MCF 10A (cell line): ENCODE measurements at regions of chr4 and their contacts with region 1.

Region 1: GRCh38 chr4:110005461-110006056 is 92.9 kb downstream of the EGF start:
- DNase-seq: peak; percentile 77
- H3K4me3 Mint-ChIP-seq: no peak overlapping the region
- H3K27ac Mint-ChIP-seq: no peak overlapping the region
- H3K4me1 Mint-ChIP-seq: peaks cover 6% of the 10 kb centered on the region
- H3K27me3 Mint-ChIP-seq: no peaks in the 10 kb centered on the region
- CTCF ChIP-seq: peak; percentile 64

Region 2: GRCh38 chr4:109702950-109703663 is 302.5 kb before region 1 on chr4 and contains the start of gene CASP6:
- CTCF ChIA-PET with region 1: no interaction called
- POLR2A ChIA-PET with region 1: no interaction called
- intact Hi-C with region 1: no loop called
- DNase-seq: peak; percentile 79
- H3K4me3 Mint-ChIP-seq: peak within 1 kb of the TSS; percentile 94
- H3K27ac Mint-ChIP-seq: peak within 1 kb of the TSS; percentile 95
- H3K4me1 Mint-ChIP-seq: peaks cover 28% of the 10 kb centered on the region
- H3K27me3 Mint-ChIP-seq: no peaks in the 10 kb centered on the region
- CTCF ChIP-seq: peak; percentile 60
- total RNA-seq, gene CASP6: 7.9 and 8.1 TPM in 2 replicates

Region 3: DNA sequence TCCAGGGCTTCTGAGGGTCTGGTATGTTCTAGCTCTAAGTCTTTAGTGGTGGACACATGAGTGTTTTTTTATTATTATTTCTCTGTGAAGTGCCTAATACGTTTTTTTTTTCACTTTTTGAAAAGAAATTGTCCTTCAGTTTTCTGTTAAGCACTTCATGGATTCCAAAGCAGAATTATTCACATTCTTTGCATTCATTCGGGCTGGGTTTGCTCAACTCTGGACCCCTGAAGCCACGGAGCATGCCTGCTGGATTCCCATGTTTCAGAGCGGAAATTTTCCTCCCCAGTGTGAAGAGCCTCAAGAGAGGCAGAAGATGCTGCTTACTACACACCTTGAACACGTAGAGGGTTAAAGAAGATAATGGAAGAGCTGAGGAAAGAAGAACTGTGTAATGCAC is 14.6 kb after region 1 on chr4:
- CTCF ChIA-PET with region 1: interaction called, 37 read pairs
- POLR2A ChIA-PET with region 1: interaction called, 3 read pairs
- intact Hi-C with region 1: no loop called
- DNase-seq: no peak
- H3K4me3 Mint-ChIP-seq: no peak overlapping the region
- H3K27ac Mint-ChIP-seq: no peak overlapping the region
- H3K4me1 Mint-ChIP-seq: peaks cover 7% of the 10 kb centered on the region
- H3K27me3 Mint-ChIP-seq: no peaks in the 10 kb centered on the region
- CTCF ChIP-seq: no peak

Region 4: GRCh38 chr4:110310795-110311194 is 305.2 kb after region 1 on chr4:
- CTCF ChIA-PET with region 1: interaction called, 7 read pairs
- POLR2A ChIA-PET with region 1: no interaction called
- intact Hi-C with region 1: loop called (anchors 2 kb)
- DNase-seq: no peak
- H3K4me3 Mint-ChIP-seq: no peak overlapping the region
- H3K27ac Mint-ChIP-seq: no peak overlapping the region
- H3K4me1 Mint-ChIP-seq: no peaks in the 10 kb centered on the region
- H3K27me3 Mint-ChIP-seq: no peaks in the 10 kb centered on the region
- CTCF ChIP-seq: no peak

Region 5: GRCh38 chr4:110516106-110516922 is 510.8 kb after region 1 on chr4:
- CTCF ChIA-PET with region 1: interaction called, 744 read pairs
- POLR2A ChIA-PET with region 1: interaction called, 4 read pairs
- intact Hi-C with region 1: loop called (anchors 1 kb)
- DNase-seq: peak; percentile 88
- H3K4me3 Mint-ChIP-seq: peak overlapping the region; percentile 80
- H3K27ac Mint-ChIP-seq: peak overlapping the region; percentile 75
- H3K4me1 Mint-ChIP-seq: no peaks in the 10 kb centered on the region
- H3K27me3 Mint-ChIP-seq: no peaks in the 10 kb centered on the region
- CTCF ChIP-seq: peak; percentile 56